GM12878 (cell line): ENCODE measurements at regions of chr2 and their contacts with region 1.

Region 1: GRCh38 chr2:25333981-25334380 is 7.7 kb downstream of the DNMT3A start:
- DNase-seq: no peak
- ATAC-seq: no peak; the same call in 2 of the 3 replicates
- H3K4me3 ChIP-seq: no peak overlapping the region
- H3K27ac ChIP-seq: no peak overlapping the region
- H3K4me1 ChIP-seq: peaks cover 21% of the 10 kb centered on the region
- H3K27me3 ChIP-seq: no peaks in the 10 kb centered on the region
- CTCF ChIP-seq: no peak
- EP300 ChIP-seq: no peak
- POLR2A ChIP-seq: no peak; the same call in 1 of the 2 replicates
- RAD21 ChIP-seq: no peak

Region 2: GRCh38 chr2:25257032-25257552 is 76.9 kb before region 1 on chr2:
- CTCF ChIA-PET with region 1: no interaction called
- POLR2A ChIA-PET with region 1: no interaction called
- RAD21 ChIA-PET with region 1: no interaction called
- SMC1A ChIA-PET with region 1: no interaction called
- in situ Hi-C with region 1: no loop called
- intact Hi-C with region 1: no loop called
- DNase-seq: no peak
- ATAC-seq: no peak
- H3K4me3 ChIP-seq: no peak overlapping the region
- H3K27ac ChIP-seq: no peak overlapping the region
- H3K4me1 ChIP-seq: no peaks in the 10 kb centered on the region
- H3K27me3 ChIP-seq: no peaks in the 10 kb centered on the region
- CTCF ChIP-seq: no peak
- EP300 ChIP-seq: no peak
- POLR2A ChIP-seq: no peak
- RAD21 ChIP-seq: no peak

Region 3: DNA sequence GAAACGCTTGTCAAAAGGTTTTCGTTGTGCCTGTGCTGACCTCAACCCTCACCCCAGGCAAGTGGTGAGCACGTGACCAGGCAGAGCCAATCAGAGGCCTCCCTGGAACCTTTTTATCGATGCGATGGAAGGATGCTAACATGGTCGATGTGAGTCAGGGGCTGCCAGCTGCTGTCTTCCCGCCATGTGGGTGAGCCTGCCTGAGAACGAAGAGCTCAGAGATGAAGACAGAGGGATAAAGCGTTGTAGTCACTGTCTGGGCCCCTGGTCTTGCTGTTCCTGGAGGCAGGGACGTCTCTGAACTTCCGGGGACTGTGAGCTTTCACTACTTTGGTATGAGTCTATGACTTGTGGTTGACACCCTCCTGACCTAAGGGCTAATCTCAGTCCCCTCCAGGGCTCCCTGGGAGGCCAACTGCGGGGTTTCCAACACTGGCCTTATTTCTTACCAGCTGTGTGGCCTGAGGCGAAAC is 10.9 kb before region 1 on chr2:
- CTCF ChIA-PET with region 1: interaction called, 3 read pairs
- POLR2A ChIA-PET with region 1: interaction called, 3 read pairs
- RAD21 ChIA-PET with region 1: interaction called, 7 read pairs
- SMC1A ChIA-PET with region 1: interaction called, 19 read pairs
- in situ Hi-C with region 1: no loop called
- intact Hi-C with region 1: no loop called
- DNase-seq: no peak
- ATAC-seq: peak; percentile 73
- H3K4me3 ChIP-seq: no peak overlapping the region
- H3K27ac ChIP-seq: no peak overlapping the region
- H3K4me1 ChIP-seq: peaks cover 23% of the 10 kb centered on the region
- H3K27me3 ChIP-seq: no peaks in the 10 kb centered on the region
- CTCF ChIP-seq: no peak
- EP300 ChIP-seq: no peak
- POLR2A ChIP-seq: 0 out of 2 replicates have a peak, but pooled peaks have one; percentile 16
- RAD21 ChIP-seq: no peak